ENCODE measurements at regions of chr5 and their contacts with region 1.

Region 1: GRCh38 chr5:55062039-55062779 is 38.2 kb downstream of the GZMK start:
- DNase-seq: peak; percentile 86
- ATAC-seq: peak; percentile 83
- H3K4me3 Mint-ChIP-seq: peak overlapping the region; percentile 76
- H3K27ac Mint-ChIP-seq: peak overlapping the region; percentile 90
- H3K4me1 Mint-ChIP-seq: peaks cover 66% of the 10 kb centered on the region
- H3K27me3 Mint-ChIP-seq: no peaks in the 10 kb centered on the region

Region 2: DNA sequence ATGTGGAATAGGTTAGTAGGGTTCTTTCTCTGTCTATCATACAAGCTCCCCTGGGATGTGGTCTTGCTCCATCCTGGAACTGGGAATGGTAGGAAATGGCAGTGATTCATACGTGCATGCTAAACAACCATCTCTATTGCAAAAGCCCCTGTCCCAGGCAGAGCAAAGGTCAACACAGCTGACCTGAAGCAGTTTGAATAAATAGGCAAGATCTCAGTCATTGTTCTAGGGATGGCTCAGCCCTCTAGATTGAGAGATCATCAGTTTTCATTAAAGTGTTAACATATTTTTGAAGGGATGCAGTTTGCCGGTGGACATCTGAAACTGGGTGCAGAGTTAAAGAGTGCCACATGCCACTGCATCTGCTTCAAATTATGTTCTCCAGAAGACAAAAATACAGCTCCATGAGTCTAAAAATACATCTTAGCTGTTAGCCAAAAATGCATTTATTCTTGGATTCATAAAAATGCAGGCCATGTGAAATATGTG is 301.0 kb before region 1 on chr5:
- POLR2A ChIA-PET with region 1: no interaction called
- DNase-seq: no peak
- ATAC-seq: no peak
- H3K4me3 Mint-ChIP-seq: no peak overlapping the region
- H3K27ac Mint-ChIP-seq: no peak overlapping the region
- H3K4me1 Mint-ChIP-seq: peaks cover 5% of the 10 kb centered on the region
- H3K27me3 Mint-ChIP-seq: no peaks in the 10 kb centered on the region

Region 3: DNA sequence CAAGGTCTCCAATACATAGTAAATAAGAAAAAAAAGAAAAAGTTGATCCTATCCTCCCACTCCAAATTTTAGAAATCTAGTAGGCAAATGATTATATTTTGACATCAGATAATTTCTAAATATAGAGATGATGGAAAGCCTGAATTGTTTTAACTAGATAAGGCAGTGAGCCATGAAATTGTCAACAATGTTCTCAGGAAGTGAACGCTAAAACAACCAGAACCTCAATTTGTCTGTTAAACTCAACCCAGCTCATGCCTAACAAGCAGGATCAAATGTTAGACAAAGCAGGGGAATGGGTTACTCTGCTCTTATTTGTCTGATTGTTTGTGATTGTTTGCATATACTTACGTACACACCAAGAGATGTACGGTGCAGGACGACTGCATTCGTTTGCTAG is 126.0 kb before region 1 on chr5:
- POLR2A ChIA-PET with region 1: no interaction called
- DNase-seq: no peak
- ATAC-seq: no peak
- H3K4me3 Mint-ChIP-seq: no peak overlapping the region
- H3K27ac Mint-ChIP-seq: no peak overlapping the region
- H3K4me1 Mint-ChIP-seq: peaks cover 1% of the 10 kb centered on the region
- H3K27me3 Mint-ChIP-seq: peaks cover 23% of the 10 kb centered on the region

Region 4: DNA sequence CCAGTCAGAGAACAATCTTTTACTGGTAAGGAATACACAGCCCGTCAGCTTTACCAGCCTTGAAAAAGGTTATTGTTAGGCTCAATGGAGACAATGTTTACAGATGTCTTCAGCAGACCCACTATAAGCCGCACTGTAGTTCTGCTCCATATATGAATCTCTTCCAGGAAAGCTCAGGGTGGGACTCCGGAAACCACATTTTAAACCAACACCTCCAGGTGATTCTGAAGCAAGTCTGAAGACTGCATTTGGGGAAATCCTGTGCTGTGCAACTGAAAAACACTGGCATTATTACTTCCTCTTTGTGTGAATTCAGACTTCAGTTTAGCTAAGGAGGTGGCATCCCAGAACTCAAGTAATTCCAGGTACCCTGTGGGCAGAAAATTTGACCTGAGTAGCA is 34.6 kb before region 1 on chr5:
- POLR2A ChIA-PET with region 1: interaction called, 10 read pairs
- DNase-seq: no peak
- ATAC-seq: peak; percentile 88
- H3K4me3 Mint-ChIP-seq: peak overlapping the region; percentile 68
- H3K27ac Mint-ChIP-seq: peak overlapping the region; percentile 80
- H3K4me1 Mint-ChIP-seq: peaks cover 66% of the 10 kb centered on the region
- H3K27me3 Mint-ChIP-seq: no peaks in the 10 kb centered on the region

Region 5: GRCh38 chr5:55037046-55037771 is 25.0 kb before region 1 on chr5:
- POLR2A ChIA-PET with region 1: interaction called, 36 read pairs
- DNase-seq: peak; percentile 36
- ATAC-seq: peak; percentile 96
- H3K4me3 Mint-ChIP-seq: peak overlapping the region; percentile 38
- H3K27ac Mint-ChIP-seq: peak overlapping the region; percentile 92
- H3K4me1 Mint-ChIP-seq: peaks cover 34% of the 10 kb centered on the region
- H3K27me3 Mint-ChIP-seq: no peaks in the 10 kb centered on the region

Region 6: DNA sequence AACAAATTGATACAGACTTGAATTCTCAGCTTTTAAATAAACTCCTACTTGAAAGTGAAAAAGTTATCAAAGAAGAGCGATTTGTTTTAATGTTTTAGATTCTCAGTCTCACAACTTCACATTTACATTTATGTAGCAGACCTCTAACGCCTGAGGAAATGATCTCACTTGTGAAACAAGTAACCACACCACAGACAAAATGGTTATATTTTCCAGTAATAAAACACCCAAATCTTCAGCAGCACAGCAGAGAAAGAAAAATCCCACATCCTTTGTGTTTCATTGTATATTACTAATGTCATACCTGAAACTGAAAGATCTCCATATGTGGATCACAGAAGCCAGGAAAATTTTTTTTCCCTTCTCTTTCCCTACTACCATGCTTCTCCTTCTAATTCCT is 10.5 kb after region 1 on chr5:
- POLR2A ChIA-PET with region 1: interaction called, 15 read pairs
- DNase-seq: no peak
- ATAC-seq: peak; percentile 83
- H3K4me3 Mint-ChIP-seq: peak overlapping the region; percentile 75
- H3K27ac Mint-ChIP-seq: peak overlapping the region; percentile 90
- H3K4me1 Mint-ChIP-seq: peaks cover 50% of the 10 kb centered on the region
- H3K27me3 Mint-ChIP-seq: no peaks in the 10 kb centered on the region

Region 7: GRCh38 chr5:55102348-55102747 is 40.1 kb after region 1 on chr5 and contains the start of gene GZMA:
- POLR2A ChIA-PET with region 1: interaction called, 27 read pairs
- DNase-seq: peak; percentile 61
- ATAC-seq: peak; percentile 66
- H3K4me3 Mint-ChIP-seq: peak within 1 kb of the TSS; percentile 80
- H3K27ac Mint-ChIP-seq: peak within 1 kb of the TSS; percentile 92
- H3K4me1 Mint-ChIP-seq: peaks cover 71% of the 10 kb centered on the region
- H3K27me3 Mint-ChIP-seq: no peaks in the 10 kb centered on the region
- total RNA-seq, gene GZMA: 242 to 250 TPM

Region 8: GRCh38 chr5:55113327-55113726 is 51.1 kb after region 1 on chr5:
- POLR2A ChIA-PET with region 1: no interaction called
- DNase-seq: no peak
- ATAC-seq: peak; percentile 88
- H3K4me3 Mint-ChIP-seq: peak overlapping the region; percentile 1
- H3K27ac Mint-ChIP-seq: peak overlapping the region; percentile 61
- H3K4me1 Mint-ChIP-seq: peaks cover 24% of the 10 kb centered on the region
- H3K27me3 Mint-ChIP-seq: no peaks in the 10 kb centered on the region

Region 9: GRCh38 chr5:55172051-55172899 is 110.1 kb after region 1 on chr5:
- POLR2A ChIA-PET with region 1: no interaction called
- DNase-seq: no peak
- ATAC-seq: peak; percentile 69
- H3K4me3 Mint-ChIP-seq: peak overlapping the region; percentile 83
- H3K27ac Mint-ChIP-seq: no peak overlapping the region
- H3K4me1 Mint-ChIP-seq: peaks cover 26% of the 10 kb centered on the region
- H3K27me3 Mint-ChIP-seq: peaks cover 79% of the 10 kb centered on the region

Measured in activated naive CD8-positive, alpha-beta T cell treated with anti-CD3 and anti-CD28 coated beads, Interleukin-2, amount 10 ng/mL, durations not matched to agents 7 days and 5 days (primary cell).